ENCODE measurements at regions of chr2 and their contacts with region 1.

Region 1: DNA sequence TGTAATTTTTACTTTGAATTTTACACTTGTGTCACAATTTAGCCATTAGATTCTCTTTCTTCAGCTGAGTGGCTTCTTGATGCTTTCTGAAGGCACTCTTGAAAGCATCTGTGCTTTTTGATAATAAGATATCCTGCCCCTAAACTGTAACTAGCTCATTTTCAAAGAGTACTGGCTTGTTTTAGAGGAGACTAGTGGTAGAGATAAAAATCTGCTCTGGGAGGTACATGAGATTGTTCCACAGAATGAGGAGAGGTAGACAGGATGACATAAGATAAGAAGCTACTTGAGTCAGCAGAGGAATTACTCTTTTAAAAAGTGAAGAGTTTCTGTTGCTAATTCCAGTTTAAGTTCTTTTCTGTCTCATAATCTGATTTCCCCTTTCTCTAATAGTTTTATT is 10.6 kb downstream of the PLEKHB2 start:
- DNase-seq: no peak
- H3K4me3 Mint-ChIP-seq: no peak overlapping the region
- H3K27ac Mint-ChIP-seq: no peak overlapping the region
- H3K4me1 Mint-ChIP-seq: peaks cover 60% of the 10 kb centered on the region
- H3K27me3 Mint-ChIP-seq: no peaks in the 10 kb centered on the region

Region 2: GRCh38 chr2:131064589-131065512 is 50.9 kb before region 1 on chr2:
- CTCF ChIA-PET with region 1: no interaction called
- intact Hi-C with region 1: no loop called
- DNase-seq: no peak
- H3K4me3 Mint-ChIP-seq: no peak overlapping the region
- H3K27ac Mint-ChIP-seq: no peak overlapping the region
- H3K4me1 Mint-ChIP-seq: peaks cover 35% of the 10 kb centered on the region
- H3K27me3 Mint-ChIP-seq: no peaks in the 10 kb centered on the region

Region 3: DNA sequence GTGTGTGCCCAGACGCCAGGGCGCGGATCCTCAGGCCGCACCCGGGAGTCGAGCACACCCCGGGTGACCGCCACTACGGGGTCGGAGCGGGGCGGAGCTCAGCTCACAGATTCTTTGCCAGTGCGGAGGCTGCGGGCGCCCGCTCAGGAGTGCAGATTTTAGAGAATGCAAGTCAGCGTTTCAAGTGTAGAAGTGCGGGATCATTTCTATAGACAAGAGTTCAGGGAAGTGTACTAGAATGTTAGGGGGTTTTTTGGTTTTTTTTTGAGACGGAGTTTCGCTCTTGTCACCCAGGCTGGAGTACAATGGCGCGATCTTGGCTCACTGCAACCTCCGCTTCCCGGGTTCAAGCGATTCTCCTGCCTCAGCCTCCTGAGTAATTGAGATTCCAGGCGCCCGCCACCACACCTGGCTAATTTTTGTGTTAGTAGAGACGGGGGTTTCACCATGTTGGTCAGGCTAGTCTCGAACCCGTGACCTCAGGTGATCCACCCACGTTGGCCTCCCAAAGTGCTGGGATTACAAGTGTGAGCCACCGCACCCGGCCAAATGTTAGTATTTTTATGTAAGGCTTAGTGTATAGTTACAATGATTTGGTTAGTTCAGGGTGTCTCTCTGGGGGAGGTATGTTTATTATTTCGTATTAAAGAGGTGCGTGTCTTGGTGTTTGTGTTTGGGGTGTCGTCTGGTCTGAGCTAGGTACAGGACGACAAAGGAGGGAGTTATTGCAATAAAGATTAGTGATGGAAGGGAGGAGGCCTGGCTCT is 21.9 kb before region 1 on chr2:
- CTCF ChIA-PET with region 1: no interaction called
- intact Hi-C with region 1: no loop called
- DNase-seq: peak; percentile 53
- H3K4me3 Mint-ChIP-seq: peak overlapping the region; percentile 85
- H3K27ac Mint-ChIP-seq: peak overlapping the region; percentile 92
- H3K4me1 Mint-ChIP-seq: peaks cover 18% of the 10 kb centered on the region
- H3K27me3 Mint-ChIP-seq: no peaks in the 10 kb centered on the region

Region 4: GRCh38 chr2:131168538-131168937 is 52.8 kb after region 1 on chr2:
- CTCF ChIA-PET with region 1: no interaction called
- intact Hi-C with region 1: loop called (anchors 1 kb)
- DNase-seq: no peak
- H3K4me3 Mint-ChIP-seq: no peak overlapping the region
- H3K27ac Mint-ChIP-seq: no peak overlapping the region
- H3K4me1 Mint-ChIP-seq: no peaks in the 10 kb centered on the region
- H3K27me3 Mint-ChIP-seq: peaks cover 2% of the 10 kb centered on the region

Region 5: GRCh38 chr2:131816831-131817230 is 701.1 kb after region 1 on chr2:
- CTCF ChIA-PET with region 1: no interaction called
- intact Hi-C with region 1: no loop called
- DNase-seq: no peak
- H3K4me3 Mint-ChIP-seq: no peak overlapping the region
- H3K27ac Mint-ChIP-seq: no peak overlapping the region
- H3K4me1 Mint-ChIP-seq: no peaks in the 10 kb centered on the region
- H3K27me3 Mint-ChIP-seq: no peaks in the 10 kb centered on the region

Measured in activated naive CD4-positive, alpha-beta T cell treated with anti-CD3 and anti-CD28 coated beads for 36 hours (primary cell).